Dorsolateral prefrontal cortex (tissue), 120 donors: ENCODE measurements at regions of chr11 and their contacts with region 1.

Region 1: DNA sequence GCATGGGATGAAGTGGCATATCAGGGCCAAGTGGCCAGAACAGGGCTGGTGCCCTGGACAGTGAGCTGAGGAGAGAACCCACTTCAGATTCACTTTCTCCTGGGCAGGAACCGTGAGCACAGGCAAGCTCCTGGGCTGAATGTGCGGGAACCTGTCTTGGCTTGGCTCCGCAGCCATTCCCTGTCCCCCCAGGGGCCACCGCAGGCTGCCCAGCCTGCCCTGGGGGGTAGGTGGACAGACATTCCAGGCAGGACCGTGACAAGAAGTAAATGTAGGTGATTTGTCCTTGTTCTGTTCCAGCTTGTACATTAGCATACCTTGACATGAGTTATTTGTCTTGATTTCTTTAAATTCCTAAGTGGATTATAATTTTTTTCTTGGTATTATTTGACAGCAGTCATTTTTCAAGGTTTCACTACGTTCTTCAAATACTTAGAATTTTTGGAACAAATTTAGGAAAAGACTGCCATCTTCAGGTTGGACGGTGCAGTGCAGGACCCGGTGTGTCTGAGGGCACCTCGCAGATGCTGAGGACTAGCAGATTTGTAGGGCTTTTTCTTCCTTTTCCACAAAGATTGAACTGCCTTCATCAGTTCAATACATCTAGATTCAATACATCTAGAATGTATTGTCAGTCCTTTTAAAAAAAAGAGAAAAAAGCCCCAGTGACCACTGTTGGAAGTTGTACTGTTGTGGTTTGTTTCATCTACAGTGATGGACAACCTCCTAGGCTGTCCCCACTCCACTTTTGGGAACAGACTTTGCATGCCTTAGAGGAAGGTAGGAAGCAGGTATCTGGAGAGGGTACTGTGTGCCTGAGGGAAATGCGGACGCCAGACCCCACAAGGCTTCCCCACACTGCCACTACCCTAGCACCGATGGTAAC is 115.1 kb upstream of the RASSF10 start:
- DNase-seq: peak in 9 of 10 donors; percentile 43 to 79 (median 67)
- H3K4me3 ChIP-seq: no peak overlapping the region
- H3K27ac ChIP-seq: no peak overlapping the region
- H3K27me3 ChIP-seq: no peaks in the 10 kb centered on the region
- CTCF ChIP-seq: peak; percentile 81 to 98 (median 93)

Region 2: GRCh38 chr11:12052676-12053605 is 841.1 kb before region 1 on chr11:
- intact Hi-C with region 1: loop called in 1 of 2 experiments (anchors 5 kb)
- DNase-seq: peak in 5 of 10 donors; percentile 42 to 77 (median 48)
- H3K4me3 ChIP-seq: no peak overlapping the region
- H3K27ac ChIP-seq: peak overlapping the region in 6 of 59 donors; percentile 5 to 45 (median 16)
- H3K27me3 ChIP-seq: no peaks in the 10 kb centered on the region
- CTCF ChIP-seq: no peak

Region 3: DNA sequence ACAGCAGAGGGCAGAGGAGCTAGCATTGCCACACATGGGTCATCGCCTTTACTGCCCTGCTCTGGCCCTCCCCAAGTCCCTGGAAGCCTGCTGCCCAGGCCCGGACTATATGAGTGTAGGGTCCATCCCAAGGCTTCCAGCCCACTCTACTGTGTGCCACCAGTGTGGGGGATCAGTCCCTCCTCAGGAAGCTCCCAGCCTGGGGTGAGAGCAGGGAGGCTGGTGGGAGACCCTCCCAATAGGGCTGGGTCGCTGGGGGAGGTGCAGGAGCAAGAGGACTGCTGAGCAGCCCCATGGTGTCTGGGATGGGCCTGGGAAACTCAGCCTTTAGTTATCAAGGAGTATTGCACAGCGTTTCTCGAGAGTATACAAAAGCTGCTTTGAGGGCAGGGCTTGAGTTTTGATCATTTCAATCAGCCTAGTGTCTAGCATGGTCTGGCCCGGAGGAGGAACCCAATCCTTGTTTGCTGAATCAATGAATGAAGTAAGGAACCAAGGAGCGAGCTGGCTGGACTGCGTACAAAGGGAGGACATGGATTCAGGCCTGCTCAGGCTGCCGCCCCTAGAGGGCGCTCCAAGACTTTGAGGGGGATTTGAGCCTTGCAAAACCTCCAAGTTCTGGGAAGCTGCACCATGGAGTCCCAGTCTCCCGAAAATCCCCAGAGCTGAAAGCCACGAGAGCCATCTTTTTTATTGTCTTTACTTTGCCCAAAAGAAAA is 605.7 kb before region 1 on chr11:
- intact Hi-C with region 1: loop called in 1 of 2 experiments (anchors 1 kb)
- DNase-seq: peak in 9 of 10 donors; percentile 62 to 87 (median 82)
- H3K4me3 ChIP-seq: no peak overlapping the region
- H3K27ac ChIP-seq: peak overlapping the region in 16 of 59 donors; percentile 12 to 69 (median 58)
- H3K27me3 ChIP-seq: peaks cover 0 to 11% (median 0%) of the 10 kb centered on the region in 45 donors
- CTCF ChIP-seq: peak; percentile 40 to 95 (median 88)

Region 4: DNA sequence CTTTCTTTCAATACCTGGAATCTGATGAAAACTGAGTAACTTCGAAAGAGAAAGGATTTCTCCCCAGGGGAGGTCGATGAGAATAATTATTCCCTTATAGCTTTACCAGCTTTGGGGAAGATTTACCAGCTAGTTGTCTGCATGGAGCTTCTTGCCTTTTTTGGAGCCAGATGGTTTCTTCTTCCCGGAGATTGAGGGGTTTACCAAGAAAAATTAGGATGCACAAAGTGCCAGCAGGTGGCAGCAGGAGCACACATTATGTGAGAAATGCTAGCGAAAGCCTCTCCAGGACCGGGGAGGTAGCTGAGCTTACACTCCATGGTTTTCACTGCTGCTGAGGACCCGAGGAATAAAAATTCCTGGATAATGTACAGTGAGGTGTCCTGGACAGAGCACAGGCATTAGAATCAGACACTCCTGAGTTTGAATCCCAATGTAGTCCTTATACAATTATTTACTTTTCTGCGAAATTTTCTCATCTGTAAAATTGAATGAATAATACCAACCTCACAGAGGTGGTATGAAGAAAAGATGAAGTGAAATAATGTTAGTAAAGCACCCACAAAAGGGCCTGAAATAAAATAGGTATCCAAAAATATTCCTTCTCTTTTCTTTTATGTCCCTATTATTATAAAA is 562.7 kb before region 1 on chr11:
- intact Hi-C with region 1: loop called (anchors 2 kb)
- DNase-seq: peak; percentile 69 to 92 (median 84)
- H3K4me3 ChIP-seq: peak overlapping the region in 20 of 59 donors; percentile 0 to 48 (median 23)
- H3K27ac ChIP-seq: peak overlapping the region in 16 of 59 donors; percentile 11 to 73 (median 60)
- H3K27me3 ChIP-seq: peaks cover 0 to 11% (median 0%) of the 10 kb centered on the region in 45 donors
- CTCF ChIP-seq: peak; percentile 77 to 97 (median 88)

Region 5: GRCh38 chr11:12411806-12412727 is 482.0 kb before region 1 on chr11:
- intact Hi-C with region 1: loop called in 1 of 2 experiments (anchors 5 kb)
- DNase-seq: peak in 4 of 10 donors; percentile 38 to 45 (median 44)
- H3K4me3 ChIP-seq: no peak overlapping the region
- H3K27ac ChIP-seq: peak overlapping the region in 24 of 59 donors; percentile 16 to 94 (median 46)
- H3K27me3 ChIP-seq: peaks cover 0 to 3% (median 0%) of the 10 kb centered on the region in 45 donors
- CTCF ChIP-seq: peak; percentile 30 to 70 (median 56)

Region 6: GRCh38 chr11:12485328-12485727 is 408.7 kb before region 1 on chr11:
- intact Hi-C with region 1: no loop called
- DNase-seq: no peak
- H3K4me3 ChIP-seq: no peak overlapping the region
- H3K27ac ChIP-seq: no peak overlapping the region
- H3K27me3 ChIP-seq: no peaks in the 10 kb centered on the region
- CTCF ChIP-seq: peak in 14 of 56 donors; percentile 14 to 39 (median 22)

Region 7: GRCh38 chr11:12599408-12600143 is 294.5 kb before region 1 on chr11:
- intact Hi-C with region 1: loop called (anchors 5 to 10 kb)
- DNase-seq: peak in 8 of 10 donors; percentile 12 to 49 (median 38)
- H3K4me3 ChIP-seq: no peak overlapping the region
- H3K27ac ChIP-seq: no peak overlapping the region
- H3K27me3 ChIP-seq: peaks cover 0 to 6% (median 0%) of the 10 kb centered on the region in 45 donors
- CTCF ChIP-seq: peak in 55 of 56 donors; percentile 38 to 82 (median 68)

Region 8: GRCh38 chr11:12673924-12674570 is 220.0 kb before region 1 on chr11 and contains the start of gene TEAD1:
- intact Hi-C with region 1: loop called in 1 of 2 experiments (anchors 5 kb)
- DNase-seq: peak; percentile 93 to 99 (median 96)
- H3K4me3 ChIP-seq: peak within 1 kb of the TSS; percentile 55 to 92 (median 82)
- H3K27ac ChIP-seq: peak within 1 kb of the TSS in 58 of 59 donors; percentile 42 to 95 (median 88)
- H3K27me3 ChIP-seq: no peaks in the 10 kb centered on the region
- CTCF ChIP-seq: peak in 24 of 56 donors; percentile 3 to 57 (median 22)
- total RNA-seq, gene TEAD1: 22.9 to 101 (median 43.9) TPM